ENCODE measurements at regions of chr3 and their contacts with region 1.

Region 1: GRCh38 chr3:66816090-66816761 is 181.9 kb upstream of the KBTBD8 start:
- DNase-seq: no peak
- H3K4me3 Mint-ChIP-seq: no peak overlapping the region
- H3K27ac Mint-ChIP-seq: no peak overlapping the region
- H3K4me1 Mint-ChIP-seq: no peaks in the 10 kb centered on the region
- H3K27me3 Mint-ChIP-seq: peaks cover 14% of the 10 kb centered on the region

Region 2: DNA sequence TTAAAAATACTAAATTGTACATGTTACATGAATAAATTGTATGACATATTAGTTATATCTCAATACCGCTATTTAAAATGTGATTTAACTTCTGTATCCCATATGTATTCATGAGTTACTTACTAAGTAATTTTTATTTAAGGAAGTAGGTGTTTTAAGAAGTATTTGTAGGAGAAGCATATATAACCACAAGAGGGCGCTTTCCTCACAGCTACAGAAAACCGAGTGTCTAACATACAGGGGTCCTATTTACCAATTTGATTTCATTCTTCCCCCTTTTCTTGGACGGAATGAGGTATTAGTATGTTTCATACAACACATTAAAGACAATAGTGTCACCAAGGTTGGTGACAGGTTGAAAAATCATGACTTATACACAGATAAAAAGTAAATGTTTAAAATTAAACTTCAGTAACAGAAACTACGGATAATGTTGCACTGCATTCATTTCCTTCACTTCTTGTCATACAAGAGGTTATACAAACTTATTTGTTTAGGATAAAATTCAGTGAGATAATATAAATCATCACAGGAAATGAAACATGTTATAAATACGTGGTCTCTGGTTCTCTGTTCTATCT is 1031.1 kb before region 1 on chr3:
- intact Hi-C with region 1: loop called (anchors 5 kb)
- DNase-seq: no peak
- H3K4me3 Mint-ChIP-seq: no peak overlapping the region
- H3K27ac Mint-ChIP-seq: no peak overlapping the region
- H3K4me1 Mint-ChIP-seq: no peaks in the 10 kb centered on the region
- H3K27me3 Mint-ChIP-seq: peaks cover 7% of the 10 kb centered on the region

Region 3: GRCh38 chr3:65914740-65915367 is 901.4 kb before region 1 on chr3:
- intact Hi-C with region 1: no loop called
- DNase-seq: no peak
- H3K4me3 Mint-ChIP-seq: no peak overlapping the region
- H3K27ac Mint-ChIP-seq: no peak overlapping the region
- H3K4me1 Mint-ChIP-seq: no peaks in the 10 kb centered on the region
- H3K27me3 Mint-ChIP-seq: no peaks in the 10 kb centered on the region

Region 4: DNA sequence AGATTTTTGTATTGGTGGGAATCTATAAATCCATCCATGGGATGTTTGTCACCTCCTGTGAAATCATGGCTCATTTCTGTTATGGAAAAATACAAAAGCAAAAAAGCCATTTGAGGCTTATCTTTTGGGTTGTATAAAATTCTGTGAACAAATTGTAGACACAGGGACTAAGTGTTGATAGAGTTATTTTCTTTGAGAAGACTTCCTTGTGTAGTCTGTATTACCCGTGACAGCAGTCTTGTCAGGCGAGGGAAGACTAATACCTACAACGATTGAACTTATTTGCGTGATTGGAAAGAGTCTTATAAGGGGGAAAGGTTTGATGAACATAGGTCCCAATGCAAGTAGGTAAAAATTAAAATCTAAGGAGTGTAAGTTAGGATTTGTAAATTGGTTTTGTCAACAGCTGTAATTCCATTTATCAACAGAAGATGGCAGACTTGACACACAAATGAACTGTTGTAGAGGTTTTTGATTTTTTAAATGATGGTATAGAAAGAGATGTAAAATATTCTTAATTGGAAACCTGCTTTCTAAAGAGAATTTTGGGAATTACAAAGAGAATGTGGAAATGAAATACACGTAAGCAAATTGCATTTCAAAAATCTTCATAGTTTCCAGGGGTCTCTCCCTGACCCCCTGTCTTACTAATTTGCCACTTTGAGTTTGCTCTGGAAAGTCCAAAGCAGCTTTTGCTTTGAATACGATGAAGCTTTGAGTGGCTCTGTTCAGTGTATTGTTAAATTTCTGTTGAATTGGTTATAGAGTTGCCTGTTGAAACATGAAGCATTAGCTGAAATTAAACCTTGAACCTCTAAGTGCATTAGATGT is 562.2 kb before region 1 on chr3:
- intact Hi-C with region 1: loop called (anchors 1 kb)
- DNase-seq: no peak
- H3K4me3 Mint-ChIP-seq: no peak overlapping the region
- H3K27ac Mint-ChIP-seq: no peak overlapping the region
- H3K4me1 Mint-ChIP-seq: no peaks in the 10 kb centered on the region
- H3K27me3 Mint-ChIP-seq: no peaks in the 10 kb centered on the region

Region 5: DNA sequence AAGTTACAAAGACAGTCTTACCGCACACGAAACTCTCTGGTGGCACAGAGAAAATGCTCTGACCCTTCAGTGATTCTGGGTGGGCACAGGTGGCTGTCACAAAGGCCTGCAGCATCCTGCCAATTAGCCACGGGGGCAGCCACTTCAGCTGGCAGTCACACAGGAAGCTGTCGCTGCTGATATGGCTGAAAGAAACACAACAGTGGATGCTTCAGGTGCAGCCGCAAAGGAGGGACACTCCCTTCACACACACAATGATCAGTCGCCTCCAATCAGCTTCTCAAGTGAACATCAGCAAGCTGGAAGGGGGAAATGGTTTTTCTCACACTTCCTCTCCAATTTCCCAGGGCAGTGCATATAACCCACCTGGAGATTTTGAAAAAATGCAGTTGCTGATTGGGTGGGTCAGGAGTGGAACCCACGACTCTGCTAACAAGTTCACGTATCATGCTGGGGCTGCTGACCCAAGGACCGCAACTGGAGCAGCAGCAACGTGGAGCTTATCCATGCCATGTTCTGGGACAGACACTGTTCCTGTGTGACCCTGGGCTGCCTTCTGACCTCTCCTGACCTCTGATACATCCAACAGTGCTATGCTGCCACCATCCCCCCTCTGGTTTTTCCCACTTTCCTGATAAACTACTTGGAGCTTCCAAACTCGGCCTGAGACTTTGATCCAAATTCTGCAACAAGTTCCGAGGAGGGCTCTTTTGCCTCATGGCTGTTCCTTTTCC is 422.0 kb before region 1 on chr3:
- intact Hi-C with region 1: loop called (anchors 5 kb)
- DNase-seq: peak; percentile 25
- H3K4me3 Mint-ChIP-seq: peak overlapping the region; percentile 1
- H3K27ac Mint-ChIP-seq: peak overlapping the region; percentile 55
- H3K4me1 Mint-ChIP-seq: peaks cover 42% of the 10 kb centered on the region
- H3K27me3 Mint-ChIP-seq: no peaks in the 10 kb centered on the region

Region 6: GRCh38 chr3:66407611-66408218 is 408.5 kb before region 1 on chr3:
- intact Hi-C with region 1: loop called (anchors 1 kb)
- DNase-seq: peak; percentile 63
- H3K4me3 Mint-ChIP-seq: no peak overlapping the region
- H3K27ac Mint-ChIP-seq: no peak overlapping the region
- H3K4me1 Mint-ChIP-seq: peaks cover 16% of the 10 kb centered on the region
- H3K27me3 Mint-ChIP-seq: no peaks in the 10 kb centered on the region

Region 7: DNA sequence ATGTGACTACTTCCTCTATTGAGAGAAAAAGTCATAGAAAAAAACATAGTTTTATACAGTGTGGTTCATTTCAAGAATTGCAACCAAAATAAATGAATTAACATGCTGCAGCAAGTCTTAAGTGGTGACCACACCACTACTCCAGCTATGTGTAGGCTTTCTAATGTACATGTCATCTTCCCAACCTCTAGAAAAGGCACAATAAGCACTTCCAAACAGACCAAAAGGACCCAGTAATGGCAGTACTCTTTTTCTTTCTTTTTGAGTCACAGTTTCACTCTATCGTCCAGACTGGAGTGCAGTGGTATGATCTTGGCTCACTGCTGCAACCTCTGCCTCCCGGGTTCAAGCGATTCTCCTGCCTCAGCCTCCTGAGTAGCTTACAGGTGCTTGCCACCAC is 37.4 kb before region 1 on chr3:
- intact Hi-C with region 1: no loop called
- DNase-seq: no peak
- H3K4me3 Mint-ChIP-seq: no peak overlapping the region
- H3K27ac Mint-ChIP-seq: no peak overlapping the region
- H3K4me1 Mint-ChIP-seq: no peaks in the 10 kb centered on the region
- H3K27me3 Mint-ChIP-seq: peaks cover 2% of the 10 kb centered on the region

Measured in activated T-helper 1 cell treated with anti-CD3 and anti-CD28 coated beads, Interleukin-12 subunit alpha, Interleukin-12 subunit beta, Interleukin-2, Interleukin-4 antibody, amounts not matched to agents 30 ng/mL and 10 ng/mL and 1 ng/mL, durations not matched to agents 14 hours and 24 hours and 36 hours (primary cell).